Activated T-helper 1 cell treated with anti-CD3 and anti-CD28 coated beads, Interleukin-12 subunit alpha, Interleukin-12 subunit beta, Interleukin-2, Interleukin-4 antibody, amounts not matched to agents 30 ng/mL and 10 ng/mL and 1 ng/mL, durations not matched to agents 14 hours and 24 hours and 36 hours (primary cell): ENCODE measurements at regions of chr7 and their contacts with region 1.

Region 1: GRCh38 chr7:158976849-158977593 is 120.7 kb downstream of the DYNC2I1 start:
- DNase-seq: peak; percentile 77
- H3K4me3 Mint-ChIP-seq: peak overlapping the region; percentile 82
- H3K27ac Mint-ChIP-seq: peak overlapping the region; percentile 89
- H3K4me1 Mint-ChIP-seq: peaks cover 20% of the 10 kb centered on the region
- H3K27me3 Mint-ChIP-seq: no peaks in the 10 kb centered on the region

Region 2: GRCh38 chr7:158394936-158395335 is 582.1 kb before region 1 on chr7:
- intact Hi-C with region 1: loop called (anchors 10 kb)
- DNase-seq: no peak
- H3K4me3 Mint-ChIP-seq: no peak overlapping the region
- H3K27ac Mint-ChIP-seq: no peak overlapping the region
- H3K4me1 Mint-ChIP-seq: no peaks in the 10 kb centered on the region
- H3K27me3 Mint-ChIP-seq: no peaks in the 10 kb centered on the region

Region 3: DNA sequence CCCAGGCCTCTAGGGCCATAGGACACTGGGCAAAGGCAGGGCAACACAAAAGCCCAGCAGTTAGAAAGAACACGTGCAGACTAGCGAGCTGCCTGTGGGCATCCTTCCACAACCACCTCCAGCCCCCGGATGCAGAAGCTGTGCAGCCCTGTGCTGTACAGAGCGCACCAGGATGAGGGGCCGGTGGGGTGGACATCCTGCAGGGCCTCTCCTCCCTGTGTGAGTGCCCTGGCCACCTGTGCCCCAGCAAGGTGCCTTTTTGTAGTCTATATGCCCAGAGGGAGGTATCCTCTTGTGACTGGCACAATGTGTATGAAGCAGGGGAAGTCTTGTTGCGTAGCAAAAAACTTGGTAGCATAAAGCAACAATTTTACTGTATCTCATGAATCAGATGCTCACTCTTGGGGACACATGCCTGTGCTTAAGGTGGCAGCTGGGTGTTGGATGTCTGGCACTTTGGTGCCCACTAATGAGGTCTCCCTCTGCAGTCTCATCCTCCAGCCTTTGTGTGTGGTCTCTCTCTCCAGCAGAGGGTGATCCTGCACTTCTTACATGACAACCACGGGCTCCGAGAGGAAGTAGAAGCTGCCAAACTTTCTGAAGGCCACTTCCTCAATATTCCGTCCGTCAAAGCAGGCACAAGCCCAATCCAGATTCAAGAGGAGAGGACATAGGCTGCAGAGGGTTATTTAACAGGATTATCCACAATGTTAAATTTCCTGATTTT is 281.1 kb before region 1 on chr7:
- intact Hi-C with region 1: loop called (anchors 1 kb)
- DNase-seq: no peak
- H3K4me3 Mint-ChIP-seq: no peak overlapping the region
- H3K27ac Mint-ChIP-seq: peak overlapping the region; percentile 41
- H3K4me1 Mint-ChIP-seq: peaks cover 56% of the 10 kb centered on the region
- H3K27me3 Mint-ChIP-seq: no peaks in the 10 kb centered on the region

Region 4: GRCh38 chr7:158782761-158783401 is 194.1 kb before region 1 on chr7:
- intact Hi-C with region 1: loop called (anchors 1 kb)
- DNase-seq: no peak
- H3K4me3 Mint-ChIP-seq: no peak overlapping the region
- H3K27ac Mint-ChIP-seq: no peak overlapping the region
- H3K4me1 Mint-ChIP-seq: peaks cover 8% of the 10 kb centered on the region
- H3K27me3 Mint-ChIP-seq: no peaks in the 10 kb centered on the region

Region 5: GRCh38 chr7:158811894-158812293 is 165.1 kb before region 1 on chr7:
- intact Hi-C with region 1: no loop called
- DNase-seq: no peak
- H3K4me3 Mint-ChIP-seq: peak overlapping the region; percentile 64
- H3K27ac Mint-ChIP-seq: peak overlapping the region; percentile 95
- H3K4me1 Mint-ChIP-seq: peaks cover 74% of the 10 kb centered on the region
- H3K27me3 Mint-ChIP-seq: no peaks in the 10 kb centered on the region

Region 6: GRCh38 chr7:158829342-158830210 is 147.4 kb before region 1 on chr7 and contains the start of gene ESYT2:
- intact Hi-C with region 1: loop called (anchors 1 kb)
- DNase-seq: peak; percentile 99
- H3K4me3 Mint-ChIP-seq: peak within 1 kb of the TSS; percentile 95
- H3K27ac Mint-ChIP-seq: peak within 1 kb of the TSS; percentile 81
- H3K4me1 Mint-ChIP-seq: peaks cover 32% of the 10 kb centered on the region
- H3K27me3 Mint-ChIP-seq: peaks cover 4% of the 10 kb centered on the region
- total RNA-seq, gene ESYT2: 59.1 and 63.1 TPM in 2 replicates

Region 7: DNA sequence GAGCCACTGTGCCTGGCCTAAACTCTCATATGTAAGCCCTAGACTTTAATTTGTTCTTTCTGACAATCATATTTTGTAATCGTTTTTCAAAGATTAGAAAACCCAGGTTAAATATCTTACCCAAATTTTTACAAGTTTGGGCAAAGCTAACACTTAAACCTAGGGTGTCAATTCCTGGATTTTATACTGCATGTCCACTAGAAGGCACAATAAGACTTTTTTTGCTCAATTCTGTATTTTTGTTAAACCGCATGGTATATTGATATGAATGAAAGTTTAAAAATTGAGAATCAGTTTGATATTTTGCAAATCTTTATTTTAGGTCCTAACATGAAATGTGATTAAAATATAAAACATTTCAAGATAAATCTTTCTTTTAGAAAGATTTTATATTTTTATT is 91.4 kb before region 1 on chr7:
- intact Hi-C with region 1: loop called (anchors 1 kb)
- DNase-seq: no peak
- H3K4me3 Mint-ChIP-seq: no peak overlapping the region
- H3K27ac Mint-ChIP-seq: no peak overlapping the region
- H3K4me1 Mint-ChIP-seq: no peaks in the 10 kb centered on the region
- H3K27me3 Mint-ChIP-seq: no peaks in the 10 kb centered on the region